Activated CD4-positive, alpha-beta T cell treated with anti-CD3 and anti-CD28 coated beads, Interleukin-2, amount 10 ng/mL, durations not matched to agents 24 days and 14 days (primary cell): ENCODE measurements at regions of chr22 and their contacts with region 1.

Region 1: DNA sequence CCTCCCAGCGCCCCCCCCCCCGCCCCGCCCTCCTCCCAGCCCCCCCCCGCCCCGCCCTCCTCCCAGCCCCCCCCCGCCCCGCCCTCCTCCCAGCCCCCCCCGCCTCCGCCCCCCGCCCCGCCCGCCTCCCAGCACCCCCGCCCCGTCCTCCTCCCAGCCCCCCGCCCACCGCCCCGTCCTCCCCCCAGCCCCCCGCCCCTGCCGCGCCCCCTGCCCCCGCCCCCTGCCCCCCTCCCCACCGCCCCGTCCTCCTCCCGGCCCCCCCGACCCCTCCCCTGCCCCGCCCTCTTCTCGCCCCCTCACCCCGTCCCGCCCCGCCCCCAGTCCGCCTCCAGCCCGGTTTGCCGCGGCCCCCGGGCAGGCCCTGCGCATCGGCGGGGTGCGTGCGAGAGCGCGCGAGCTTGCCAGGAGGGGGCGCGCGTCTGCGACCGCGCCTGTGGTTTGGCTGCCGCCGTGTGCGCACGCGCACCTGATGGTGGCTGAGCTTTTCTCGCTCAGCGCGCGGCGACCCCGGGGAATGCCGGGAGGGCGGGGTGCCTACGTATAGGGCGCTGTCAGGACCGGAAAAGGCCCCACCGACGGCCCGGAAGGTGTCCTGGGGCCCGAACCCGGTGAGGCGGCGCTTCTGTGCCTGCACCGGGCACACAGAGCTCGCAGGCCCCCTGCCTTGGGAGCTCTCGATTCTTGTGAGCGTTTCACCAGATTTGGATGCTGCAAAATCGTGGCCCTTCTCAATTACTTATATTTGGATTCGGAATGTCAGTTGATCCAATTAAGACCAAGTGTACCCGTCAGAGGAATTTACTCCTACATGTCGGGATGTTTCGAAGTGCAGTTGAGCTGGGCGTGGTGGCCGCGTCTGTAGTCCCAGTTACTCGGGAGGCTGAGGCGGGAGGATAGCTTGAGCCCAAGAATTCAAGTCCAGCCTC is 501 bp upstream of the TTLL12 start:
- DNase-seq: peak; percentile 99
- H3K4me3 Mint-ChIP-seq: peak overlapping the region; percentile 90
- H3K27ac Mint-ChIP-seq: peak overlapping the region; percentile 94
- H3K4me1 Mint-ChIP-seq: peaks cover 23% of the 10 kb centered on the region
- H3K27me3 Mint-ChIP-seq: peaks cover 8% of the 10 kb centered on the region

Region 2: GRCh38 chr22:42863349-42863961 is 324.0 kb before region 1 on chr22:
- intact Hi-C with region 1: loop called (anchors 1 kb)
- DNase-seq: peak; percentile 62
- H3K4me3 Mint-ChIP-seq: peak overlapping the region; percentile 13
- H3K27ac Mint-ChIP-seq: peak overlapping the region; percentile 91
- H3K4me1 Mint-ChIP-seq: peaks cover 12% of the 10 kb centered on the region
- H3K27me3 Mint-ChIP-seq: peaks cover 5% of the 10 kb centered on the region

Region 3: DNA sequence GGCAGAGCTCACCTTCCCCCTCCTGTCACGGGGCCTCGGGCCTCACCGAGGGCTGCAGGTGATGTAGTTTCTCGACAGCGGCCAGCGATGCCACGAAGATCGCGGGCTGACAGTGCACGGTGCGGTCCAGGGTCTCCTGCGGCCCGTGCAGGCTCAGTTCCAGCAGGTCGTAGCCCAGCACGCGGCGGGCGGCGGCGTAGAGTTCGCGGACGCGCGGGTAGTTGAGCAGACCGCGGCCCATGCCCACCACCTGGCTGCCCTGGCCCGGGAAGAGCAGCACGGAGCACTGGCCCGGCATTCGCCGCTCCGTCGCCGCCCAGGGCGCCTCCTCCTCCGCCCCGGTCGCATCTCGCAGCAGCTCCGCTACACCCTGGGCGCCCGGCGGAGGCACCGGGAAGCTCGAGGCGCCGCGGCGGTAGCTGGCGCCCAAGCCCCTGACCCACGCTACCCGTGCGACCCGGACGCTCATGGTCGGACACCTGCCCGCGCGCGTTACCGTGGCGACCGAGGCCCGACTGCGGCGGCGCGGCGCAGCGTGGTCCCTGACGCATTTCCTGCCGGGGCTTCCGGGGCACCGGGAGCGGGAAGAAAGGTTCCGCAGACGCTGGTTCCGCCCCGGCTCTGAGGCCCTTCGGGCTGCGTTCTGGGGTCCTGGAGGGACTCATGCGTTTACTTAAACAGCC is 44.4 kb before region 1 on chr22 and contains the start of gene MCAT:
- intact Hi-C with region 1: loop called (anchors 2 kb)
- DNase-seq: peak; percentile 97
- H3K4me3 Mint-ChIP-seq: peak within 1 kb of the TSS; percentile 90
- H3K27ac Mint-ChIP-seq: peak within 1 kb of the TSS; percentile 95
- H3K4me1 Mint-ChIP-seq: peaks cover 24% of the 10 kb centered on the region
- H3K27me3 Mint-ChIP-seq: no peaks in the 10 kb centered on the region
- total RNA-seq, gene MCAT: 20.9 and 24.3 TPM in 2 replicates

Region 4: GRCh38 chr22:43151251-43152002 is 36.0 kb before region 1 on chr22 and contains the start of gene TSPO:
- intact Hi-C with region 1: loop called (anchors 2 kb)
- DNase-seq: peak; percentile 88
- H3K4me3 Mint-ChIP-seq: peak within 1 kb of the TSS; percentile 97
- H3K27ac Mint-ChIP-seq: peak within 1 kb of the TSS; percentile 90
- H3K4me1 Mint-ChIP-seq: peaks cover 30% of the 10 kb centered on the region
- H3K27me3 Mint-ChIP-seq: no peaks in the 10 kb centered on the region
- total RNA-seq, gene TSPO: 126 and 138 TPM in 2 replicates

Region 5: DNA sequence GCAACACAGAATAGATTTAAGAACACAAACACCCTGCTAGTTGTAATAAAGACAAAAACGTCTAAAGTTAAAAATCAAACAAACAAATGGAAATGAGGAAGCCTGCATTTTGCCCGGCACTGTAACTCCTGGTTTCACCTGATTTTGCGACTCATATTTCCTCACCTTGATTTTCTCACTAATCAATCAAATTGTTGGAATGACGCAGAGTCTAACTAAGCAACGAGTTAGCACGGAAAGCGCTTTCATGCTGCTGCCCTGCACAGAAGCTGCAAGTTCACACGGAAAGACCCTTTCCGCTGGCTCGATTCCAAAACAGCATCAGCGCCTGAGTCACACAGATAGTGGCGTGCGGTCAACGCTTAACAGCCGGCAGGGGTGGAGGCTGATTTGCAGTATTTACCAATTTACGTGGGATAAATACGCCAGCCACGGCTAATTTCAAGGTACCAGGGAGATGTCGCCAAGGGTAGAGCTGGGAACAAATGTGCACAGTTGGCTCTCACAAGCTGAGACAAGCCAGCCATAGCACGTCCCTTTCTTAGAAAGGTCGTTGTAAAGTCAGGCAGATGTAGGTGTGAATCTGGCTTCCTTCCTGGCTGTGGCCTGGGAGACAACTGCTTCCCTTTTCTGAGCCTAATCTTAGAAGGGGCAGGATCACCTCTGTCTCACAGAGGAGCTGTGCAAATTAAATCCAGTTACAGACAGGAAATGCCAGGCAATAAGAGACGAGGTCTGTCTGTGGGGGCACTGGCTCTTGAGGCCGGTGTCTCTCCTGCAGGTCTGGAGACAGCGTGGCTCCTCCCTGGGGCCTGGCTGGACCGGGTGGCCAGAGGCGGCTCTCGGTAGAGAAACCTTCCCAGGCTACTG is 76.4 kb after region 1 on chr22:
- intact Hi-C with region 1: loop called (anchors 2 kb)
- DNase-seq: peak; percentile 95
- H3K4me3 Mint-ChIP-seq: peak overlapping the region; percentile 66
- H3K27ac Mint-ChIP-seq: peak overlapping the region; percentile 86
- H3K4me1 Mint-ChIP-seq: peaks cover 26% of the 10 kb centered on the region
- H3K27me3 Mint-ChIP-seq: no peaks in the 10 kb centered on the region